BJ (cell line): ENCODE measurements at regions of chr3 and their contacts with region 1.

Region 1: GRCh38 chr3:120558771-120559241 is 37.3 kb upstream of the NDUFB4 start:
- DNase-seq: peak; percentile 35
- H3K4me3 ChIP-seq: peak overlapping the region; percentile 50
- H3K27me3 ChIP-seq: no peaks in the 10 kb centered on the region
- CTCF ChIP-seq: peak; percentile 92

Region 2: GRCh38 chr3:120245386-120245785 is 313.4 kb before region 1 on chr3:
- CTCF ChIA-PET with region 1: interaction called, 82 read pairs
- POLR2A ChIA-PET with region 1: no interaction called
- DNase-seq: no peak
- H3K4me3 ChIP-seq: no peak overlapping the region
- H3K27me3 ChIP-seq: peaks cover 3% of the 10 kb centered on the region; the same call in 1 of the 2 replicates
- CTCF ChIP-seq: no peak

Region 3: DNA sequence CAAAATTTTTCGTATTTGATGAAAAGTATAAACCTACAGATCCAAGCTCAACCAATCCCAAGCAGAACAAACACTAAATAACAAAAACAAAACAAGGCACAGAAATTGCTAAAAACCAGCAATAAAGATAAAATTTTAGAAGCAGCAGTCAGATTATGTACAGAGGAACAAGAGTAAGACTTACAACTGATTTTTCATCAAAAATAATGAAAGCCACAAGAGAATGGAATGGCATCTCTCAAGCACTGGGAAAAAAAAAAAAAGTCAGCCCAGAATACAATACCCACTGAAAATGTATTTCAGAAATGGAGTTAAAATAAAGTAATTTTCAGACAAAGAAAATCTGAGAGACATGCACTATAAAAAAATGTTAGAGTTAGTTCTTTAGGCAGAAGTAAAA is 300.8 kb before region 1 on chr3:
- CTCF ChIA-PET with region 1: interaction called, 17 read pairs
- POLR2A ChIA-PET with region 1: no interaction called
- DNase-seq: no peak
- H3K4me3 ChIP-seq: no peak overlapping the region
- H3K27me3 ChIP-seq: no peaks in the 10 kb centered on the region
- CTCF ChIP-seq: no peak

Region 4: GRCh38 chr3:120417272-120417911 is 141.4 kb before region 1 on chr3:
- CTCF ChIA-PET with region 1: interaction called, 26 read pairs
- POLR2A ChIA-PET with region 1: no interaction called
- DNase-seq: peak; percentile 94
- H3K4me3 ChIP-seq: no peak overlapping the region
- H3K27me3 ChIP-seq: no peaks in the 10 kb centered on the region
- CTCF ChIP-seq: peak; percentile 82

Region 5: GRCh38 chr3:120424506-120424905 is 134.3 kb before region 1 on chr3:
- CTCF ChIA-PET with region 1: interaction called, 12 read pairs
- POLR2A ChIA-PET with region 1: no interaction called
- DNase-seq: no peak
- H3K4me3 ChIP-seq: no peak overlapping the region
- H3K27me3 ChIP-seq: no peaks in the 10 kb centered on the region
- CTCF ChIP-seq: no peak

Region 6: DNA sequence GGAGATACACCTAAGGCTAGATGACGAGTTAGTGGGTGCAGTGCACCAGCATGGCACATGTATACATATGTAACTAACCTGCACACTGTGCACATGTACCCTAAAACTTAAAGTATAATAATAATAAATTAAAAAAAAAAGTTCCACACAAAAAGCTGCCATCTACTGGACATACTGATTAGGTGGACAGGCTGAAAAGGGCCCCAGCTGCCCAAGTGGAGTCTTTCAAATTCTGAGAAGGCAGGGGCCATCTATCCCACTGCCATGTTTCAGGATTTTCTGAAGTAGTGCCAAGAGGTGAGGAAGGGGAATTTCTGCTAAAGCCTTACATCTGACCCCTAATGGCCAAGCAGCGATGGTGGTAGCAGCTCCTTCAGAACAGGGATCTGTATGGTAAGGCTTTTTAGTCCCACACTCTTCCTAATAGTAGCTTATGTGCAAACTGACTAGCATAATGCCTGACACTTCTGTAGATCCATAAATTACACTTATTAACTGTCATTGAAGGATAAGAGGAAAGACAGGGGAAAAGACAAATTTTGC is 115.8 kb before region 1 on chr3:
- CTCF ChIA-PET with region 1: interaction called, 15 read pairs
- POLR2A ChIA-PET with region 1: no interaction called
- DNase-seq: no peak
- H3K4me3 ChIP-seq: no peak overlapping the region
- H3K27me3 ChIP-seq: no peaks in the 10 kb centered on the region
- CTCF ChIP-seq: peak; percentile 41

Region 7: DNA sequence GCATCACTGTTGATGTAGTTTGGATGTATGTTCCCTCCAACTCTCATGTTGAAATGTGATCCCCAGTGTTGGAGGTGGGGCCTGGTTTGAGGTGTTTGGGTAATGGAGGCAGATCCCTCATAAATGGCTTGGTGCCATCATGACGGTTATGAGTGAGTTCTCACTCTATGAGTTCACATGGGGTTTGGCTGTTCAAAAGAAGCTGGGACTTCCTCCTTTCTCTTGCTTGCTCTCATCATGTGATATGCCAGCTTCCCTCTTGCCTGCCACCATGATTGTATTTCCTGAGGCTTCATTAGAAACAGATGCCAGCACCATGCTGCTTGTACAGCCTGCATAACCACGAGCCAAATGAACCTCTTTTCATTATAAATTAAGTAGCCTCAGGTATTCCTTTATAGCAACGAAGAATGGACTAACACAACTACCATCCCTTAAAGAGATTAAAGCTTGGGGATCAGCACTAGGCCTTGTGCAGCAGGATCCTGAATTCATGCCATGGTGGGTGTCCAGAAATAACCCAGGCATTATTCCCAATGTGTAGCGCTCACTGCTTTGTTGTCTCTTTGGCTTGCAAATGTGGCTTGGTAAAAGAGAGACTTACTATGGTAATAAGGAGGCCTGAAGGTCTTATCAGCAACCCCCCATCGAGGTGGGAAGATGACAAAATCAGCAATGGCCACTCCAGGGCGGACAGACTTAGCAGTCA is 79.2 kb after region 1 on chr3:
- CTCF ChIA-PET with region 1: no interaction called
- POLR2A ChIA-PET with region 1: no interaction called
- DNase-seq: no peak
- H3K4me3 ChIP-seq: no peak overlapping the region
- H3K27me3 ChIP-seq: no peaks in the 10 kb centered on the region
- CTCF ChIP-seq: no peak

Region 8: GRCh38 chr3:120795017-120795648 is 236.3 kb after region 1 on chr3:
- CTCF ChIA-PET with region 1: interaction called, 296 read pairs
- POLR2A ChIA-PET with region 1: no interaction called
- DNase-seq: no peak
- H3K4me3 ChIP-seq: no peak overlapping the region
- H3K27me3 ChIP-seq: no peaks in the 10 kb centered on the region
- CTCF ChIP-seq: peak; percentile 82

Region 9: DNA sequence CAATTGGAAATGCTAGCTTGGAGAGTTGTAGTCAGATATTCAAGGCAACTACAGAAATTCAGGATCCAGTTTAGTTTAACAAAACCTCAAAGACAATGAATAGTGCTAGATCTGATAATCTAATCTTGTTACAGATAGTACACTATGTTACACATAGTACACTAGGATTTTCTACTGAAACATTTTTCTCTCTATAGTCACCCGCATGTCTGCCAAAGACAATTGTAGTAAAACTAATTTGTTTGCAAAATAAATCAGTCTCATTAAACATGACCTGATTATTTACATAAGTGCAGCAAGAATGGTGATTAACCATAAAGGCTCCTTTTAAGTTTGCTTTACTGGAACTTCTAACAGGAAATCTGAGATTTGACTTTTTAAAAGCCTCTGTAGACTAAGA is 1411.2 kb after region 1 on chr3:
- CTCF ChIA-PET with region 1: no interaction called
- POLR2A ChIA-PET with region 1: no interaction called
- DNase-seq: no peak
- H3K4me3 ChIP-seq: no peak overlapping the region
- H3K27me3 ChIP-seq: no peaks in the 10 kb centered on the region
- CTCF ChIP-seq: no peak